A549 (cell line): ENCODE measurements at regions of chr17 and their contacts with region 1.

Region 1: DNA sequence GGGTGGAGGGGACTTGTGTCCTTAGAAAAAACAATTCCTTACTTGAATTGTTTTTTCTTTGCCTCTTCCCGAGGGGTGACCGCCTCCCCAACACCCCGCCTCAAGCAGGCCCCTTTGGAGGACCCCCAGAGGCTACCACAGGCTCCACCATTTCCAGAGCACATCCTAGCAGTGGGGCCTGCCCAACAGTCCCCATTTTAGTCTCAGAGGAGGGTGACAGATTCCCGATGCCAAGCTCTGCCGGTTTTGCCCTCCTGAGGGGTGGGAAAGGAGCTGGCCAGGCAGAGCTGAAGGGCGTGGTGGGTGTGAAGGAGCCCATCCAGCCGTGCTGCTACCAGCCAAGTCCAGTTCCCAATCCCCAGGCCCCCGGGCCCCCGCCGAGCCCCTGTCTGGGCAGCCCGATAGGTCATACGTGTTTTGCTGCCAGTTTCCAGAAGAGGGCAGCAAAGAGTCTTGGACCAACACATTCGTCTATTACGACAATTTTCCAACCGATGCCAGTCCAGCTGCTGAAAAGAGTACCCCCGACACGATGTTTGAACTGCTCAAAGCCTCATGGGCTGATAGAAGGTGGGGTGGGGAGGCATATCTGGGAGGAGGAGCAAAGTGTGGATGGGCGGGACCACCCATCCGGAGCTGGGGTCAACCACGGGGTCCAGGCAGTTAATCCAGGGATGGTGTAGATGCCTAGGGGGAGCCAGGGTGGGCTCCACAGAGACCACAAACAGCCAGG is 18.8 kb upstream of the GAA start:
- DNase-seq: peak; percentile 81 to 89
- ATAC-seq: peak; percentile 79 to 87
- H3K4me3 ChIP-seq: no peak overlapping the region; the same call in 2 of the 3 replicates
- H3K27ac ChIP-seq: peak overlapping the region; percentile 63 to 69
- H3K4me1 ChIP-seq: peaks cover 7% of the 10 kb centered on the region; the same call in 2 of the 3 replicates
- CTCF ChIP-seq: peak; percentile 90
- EP300 ChIP-seq: no peak
- POLR2A ChIP-seq: no peak
- RAD21 ChIP-seq: peak; percentile 84 to 86

Region 2: DNA sequence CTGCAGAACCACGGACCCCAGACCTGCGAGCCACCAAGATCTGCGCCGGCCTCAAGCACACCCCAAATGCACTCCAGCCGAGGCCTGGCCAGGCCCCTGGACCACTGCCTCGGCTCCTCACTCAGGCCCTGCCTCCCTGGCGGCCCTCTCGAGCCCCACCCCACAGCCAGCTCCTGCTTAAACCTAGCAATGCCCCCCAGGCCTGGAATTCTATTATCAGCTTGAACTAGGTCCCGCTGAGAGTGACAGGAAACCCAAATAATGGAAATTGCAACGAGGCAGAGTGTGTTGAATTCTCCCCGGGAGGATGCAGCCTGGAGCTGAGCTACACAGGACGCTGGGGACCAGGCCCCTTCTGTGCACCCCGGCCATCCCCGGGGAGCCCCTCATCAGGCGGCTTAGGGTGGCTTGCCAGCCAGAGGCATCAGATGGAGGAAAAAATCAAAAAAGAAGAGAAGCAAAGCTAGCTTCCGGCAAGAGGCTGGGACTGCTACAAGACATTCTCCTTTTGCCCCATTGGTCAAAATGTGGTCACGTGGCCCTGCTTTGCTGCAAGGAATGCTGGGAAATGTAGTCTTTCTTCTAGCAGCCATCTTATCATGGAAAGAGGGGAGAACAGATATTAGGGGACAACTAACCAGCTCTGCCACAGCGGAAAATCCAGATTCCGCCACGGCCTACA is 354.2 kb before region 1 on chr17:
- CTCF ChIA-PET with region 1: no interaction called
- POLR2A ChIA-PET with region 1: no interaction called
- DNase-seq: peak; percentile 95 to 100
- ATAC-seq: peak; percentile 78 to 93
- H3K4me3 ChIP-seq: no peak overlapping the region
- H3K27ac ChIP-seq: peak overlapping the region; percentile 64 to 74
- H3K4me1 ChIP-seq: no peaks in the 10 kb centered on the region
- CTCF ChIP-seq: no peak
- EP300 ChIP-seq: no peak
- POLR2A ChIP-seq: no peak
- RAD21 ChIP-seq: no peak

Region 3: GRCh38 chr17:80029258-80029974 is 53.2 kb before region 1 on chr17:
- CTCF ChIA-PET with region 1: interaction called, 12 read pairs
- POLR2A ChIA-PET with region 1: no interaction called
- DNase-seq: no peak
- ATAC-seq: peak in 1 of 2 experiments; percentile 34; a peak in 2 of 6 replicates
- H3K4me3 ChIP-seq: no peak overlapping the region
- H3K27ac ChIP-seq: peak overlapping the region in 1 of 2 experiments; percentile 20; a peak in 1 of 6 replicates
- H3K4me1 ChIP-seq: peaks cover 17% of the 10 kb centered on the region
- CTCF ChIP-seq: no peak
- EP300 ChIP-seq: no peak
- POLR2A ChIP-seq: no peak
- RAD21 ChIP-seq: no peak

Region 4: GRCh38 chr17:80071116-80071980 is 11.2 kb before region 1 on chr17:
- CTCF ChIA-PET with region 1: interaction called, 58 read pairs
- POLR2A ChIA-PET with region 1: no interaction called
- DNase-seq: no peak
- ATAC-seq: peak in 1 of 2 experiments; percentile 19; a peak in 1 of 6 replicates
- H3K4me3 ChIP-seq: no peak overlapping the region
- H3K27ac ChIP-seq: no peak overlapping the region
- H3K4me1 ChIP-seq: no peaks in the 10 kb centered on the region
- CTCF ChIP-seq: no peak
- EP300 ChIP-seq: no peak
- POLR2A ChIP-seq: no peak
- RAD21 ChIP-seq: no peak

Region 5: DNA sequence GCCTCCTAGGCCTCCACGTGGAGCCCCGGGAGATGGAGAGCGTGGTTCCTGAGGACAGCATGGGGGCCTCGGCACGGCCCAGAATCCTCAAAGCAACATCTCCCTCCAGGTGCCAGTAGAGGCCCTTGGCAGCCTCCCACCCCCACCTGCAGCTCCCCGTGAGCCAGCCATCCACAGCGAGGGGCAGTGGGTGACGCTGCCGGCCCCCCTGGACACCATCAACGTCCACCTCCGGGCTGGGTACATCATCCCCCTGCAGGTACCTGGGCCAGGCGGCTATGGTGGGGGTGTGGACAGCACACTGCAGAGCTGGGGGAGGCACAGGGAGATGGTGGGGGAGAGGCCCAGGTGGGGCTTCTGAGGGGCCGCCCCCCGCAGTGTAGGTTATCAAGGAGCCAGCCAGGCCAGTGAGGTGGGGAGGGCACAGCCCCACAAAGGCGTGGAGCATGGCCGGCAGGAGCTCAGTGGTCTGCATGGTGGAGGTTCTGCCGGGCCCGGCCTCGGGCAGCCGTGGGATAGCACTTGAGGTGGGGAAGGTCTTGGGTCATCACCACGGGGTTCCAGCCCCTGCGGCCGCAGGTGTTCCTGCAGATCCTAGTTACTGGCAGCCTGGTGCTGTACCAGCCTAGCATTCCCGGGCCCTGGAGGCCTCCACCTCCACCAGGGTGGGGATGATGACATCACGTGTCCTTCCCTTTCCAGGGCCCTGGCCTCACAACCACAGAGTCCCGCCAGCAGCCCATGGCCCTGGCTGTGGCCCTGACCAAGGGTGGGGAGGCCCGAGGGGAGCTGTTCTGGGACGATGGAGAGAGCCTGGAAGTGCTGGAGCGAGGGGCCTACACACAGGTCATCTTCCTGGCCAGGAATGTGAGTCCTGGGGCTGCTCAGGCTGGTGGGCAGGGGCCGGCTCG is 35.2 kb after region 1 on chr17:
- CTCF ChIA-PET with region 1: interaction called, 13 read pairs
- POLR2A ChIA-PET with region 1: no interaction called
- DNase-seq: no peak
- ATAC-seq: peak; percentile 14 to 16; a peak in 2 of 6 replicates
- H3K4me3 ChIP-seq: no peak overlapping the region
- H3K27ac ChIP-seq: no peak overlapping the region
- H3K4me1 ChIP-seq: no peaks in the 10 kb centered on the region
- CTCF ChIP-seq: no peak
- EP300 ChIP-seq: no peak
- POLR2A ChIP-seq: no peak
- RAD21 ChIP-seq: no peak

Region 6: DNA sequence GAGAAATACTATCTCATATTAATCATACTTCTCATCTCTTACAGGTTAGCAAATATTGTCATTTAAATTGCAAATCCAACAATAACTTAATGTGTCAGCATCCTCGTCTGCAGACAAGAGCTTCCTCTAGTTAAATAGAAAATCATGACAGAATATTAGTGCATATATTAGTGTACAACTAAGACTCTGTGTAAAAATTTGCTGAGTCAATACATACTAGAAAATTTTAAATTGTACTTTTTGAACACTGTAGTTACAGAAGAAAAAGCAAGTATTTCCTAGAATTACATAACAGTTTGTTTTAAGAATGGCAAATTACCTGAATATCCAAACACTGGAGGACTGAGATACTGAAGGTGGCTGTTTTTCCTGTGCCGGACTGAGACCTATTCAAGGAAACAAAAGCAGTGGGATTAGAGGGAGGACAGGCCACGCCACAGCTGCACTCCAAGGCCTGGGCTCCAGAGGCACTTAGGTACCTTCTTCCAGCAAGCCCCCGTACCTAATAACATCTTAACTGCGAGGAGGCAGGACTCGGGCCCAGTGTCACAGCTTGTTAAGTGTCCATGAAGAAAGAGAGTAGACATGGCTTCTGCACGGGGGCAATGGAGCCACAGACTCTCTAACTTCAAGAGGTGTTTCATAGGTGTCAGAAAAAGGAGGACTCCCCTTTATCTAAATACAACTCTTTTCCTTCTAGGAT is 59.0 kb after region 1 on chr17:
- CTCF ChIA-PET with region 1: interaction called, 21 read pairs
- POLR2A ChIA-PET with region 1: no interaction called
- DNase-seq: no peak
- ATAC-seq: no peak
- H3K4me3 ChIP-seq: no peak overlapping the region
- H3K27ac ChIP-seq: no peak overlapping the region
- H3K4me1 ChIP-seq: peaks cover 19% of the 10 kb centered on the region
- CTCF ChIP-seq: no peak
- EP300 ChIP-seq: no peak
- POLR2A ChIP-seq: no peak
- RAD21 ChIP-seq: no peak

Region 7: DNA sequence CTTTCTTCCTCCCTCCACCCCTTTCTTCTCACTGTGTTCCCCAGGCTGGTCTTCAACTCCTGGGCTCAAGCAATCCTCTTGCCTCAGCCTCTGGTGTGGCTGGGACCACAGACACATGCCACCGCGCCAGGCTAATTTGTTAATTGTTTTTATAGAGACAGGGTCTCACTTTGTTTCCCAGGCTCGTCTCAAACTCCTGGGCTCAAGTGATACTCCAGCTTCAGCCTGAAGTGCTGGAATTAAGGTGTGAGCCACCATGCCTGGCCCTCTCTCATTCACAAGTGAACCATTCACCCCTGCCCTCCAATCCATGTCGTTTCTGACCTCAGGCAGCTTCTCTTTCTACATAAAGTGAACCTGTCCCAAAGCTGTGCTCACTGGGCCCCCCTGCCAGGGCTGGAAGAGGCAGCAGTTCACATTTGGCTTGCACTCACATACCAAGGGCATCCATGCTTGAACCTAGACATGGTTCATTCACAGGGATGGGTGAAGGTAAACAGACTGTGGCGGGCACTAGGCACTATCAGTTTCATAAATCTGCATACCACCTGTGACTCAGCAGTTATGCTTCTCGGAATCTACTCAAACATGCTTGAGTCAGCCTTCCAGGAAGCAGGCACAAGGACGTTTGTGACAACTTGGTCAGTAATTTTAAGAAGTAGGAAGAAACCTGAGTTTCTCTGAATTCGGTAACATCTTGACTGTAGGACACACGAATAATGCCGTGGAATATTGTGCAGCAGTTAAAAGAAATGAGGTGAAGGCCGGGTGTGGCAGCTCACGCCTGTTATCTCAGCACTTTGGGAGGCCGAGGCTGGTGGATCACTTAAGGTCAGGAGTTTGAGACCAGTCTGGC is 172.1 kb after region 1 on chr17:
- CTCF ChIA-PET with region 1: interaction called, 46 read pairs
- POLR2A ChIA-PET with region 1: no interaction called
- DNase-seq: peak; percentile 97 to 99
- ATAC-seq: peak; percentile 90
- H3K4me3 ChIP-seq: no peak overlapping the region
- H3K27ac ChIP-seq: peak overlapping the region; percentile 94 to 99
- H3K4me1 ChIP-seq: peaks cover 72% of the 10 kb centered on the region
- CTCF ChIP-seq: no peak
- EP300 ChIP-seq: peak; percentile 83 to 92; a peak in 4 of 5 replicates
- POLR2A ChIP-seq: no peak
- RAD21 ChIP-seq: peak in 1 of 2 experiments; percentile 29; a peak in 3 of 5 replicates